Gastrocnemius medialis (tissue), 4 donors: ENCODE measurements at regions of chr19 and their contacts with region 1.

Region 1: GRCh38 chr19:57240311-57241090 is at the start of gene ZNF805:
- DNase-seq: peak; percentile 94 to 97
- ATAC-seq: peak; percentile 98 to 99
- H3K4me3 ChIP-seq: peak within 1 kb of the TSS; percentile 93 to 98 (median 97)
- H3K27ac ChIP-seq: peak within 1 kb of the TSS; percentile 89 to 97 (median 96)
- H3K4me1 ChIP-seq: peaks cover 23% of the 10 kb centered on the region in 2 donors
- H3K27me3 ChIP-seq: no peaks in the 10 kb centered on the region
- CTCF ChIP-seq: peak in 3 of 5 experiments; percentile 29 to 38 (median 36)
- POLR2A ChIP-seq: peak; percentile 62 to 67
- total RNA-seq, gene ZNF805: 9.3 to 20.2 (median 14.8) TPM

Region 2: GRCh38 chr19:57191141-57192076 is 49.1 kb before region 1 on chr19 and contains the start of gene ZNF264:
- in situ Hi-C with region 1: no loop called
- intact Hi-C with region 1: loop called (anchors 2 kb)
- DNase-seq: peak; percentile 74 to 85
- ATAC-seq: peak; percentile 96 to 97
- H3K4me3 ChIP-seq: peak within 1 kb of the TSS; percentile 92 to 96 (median 94)
- H3K27ac ChIP-seq: peak within 1 kb of the TSS; percentile 84 to 96 (median 85)
- H3K4me1 ChIP-seq: peaks cover 19 to 25% of the 10 kb centered on the region in 2 donors
- H3K27me3 ChIP-seq: peaks cover 0 to 11% (median 0%) of the 10 kb centered on the region in 3 donors
- CTCF ChIP-seq: no peak
- POLR2A ChIP-seq: peak in 1 of 2 donors; percentile 32
- total RNA-seq, gene ZNF264: 11.3 to 21.8 (median 16.9) TPM